H1 (cell line): ENCODE measurements at regions of chr12 and their contacts with region 1.

Region 1: GRCh38 chr12:100163416-100164152 is 20.9 kb upstream of the BLTP3B start:
- DNase-seq: peak; percentile 81 to 87
- H3K4me3 ChIP-seq: peak overlapping the region in 3 of 4 experiments; percentile 0 to 52 (median 28); a peak in 4 of 8 replicates
- H3K27ac ChIP-seq: no peak overlapping the region
- H3K4me1 ChIP-seq: peaks cover 2 to 8% (median 4%) of the 10 kb centered on the region in 4 experiments; a peak in 4 of 7 replicates
- H3K27me3 ChIP-seq: no peaks in the 10 kb centered on the region
- CTCF ChIP-seq: peak in 1 of 3 experiments; percentile 31; a peak in 1 of 4 replicates
- EP300 ChIP-seq: no peak
- POLR2A ChIP-seq: peak in 1 of 2 experiments; percentile 57; a peak in 1 of 3 replicates
- RAD21 ChIP-seq: peak in 1 of 2 experiments; percentile 18; a peak in 1 of 4 replicates

Region 2: GRCh38 chr12:100101000-100101399 is 62.6 kb before region 1 on chr12:
- CTCF ChIA-PET with region 1: no interaction called
- POLR2A ChIA-PET with region 1: no interaction called
- DNase-seq: no peak
- H3K4me3 ChIP-seq: no peak overlapping the region
- H3K27ac ChIP-seq: no peak overlapping the region
- H3K4me1 ChIP-seq: no peaks in the 10 kb centered on the region
- H3K27me3 ChIP-seq: no peaks in the 10 kb centered on the region
- CTCF ChIP-seq: no peak
- EP300 ChIP-seq: no peak
- POLR2A ChIP-seq: no peak
- RAD21 ChIP-seq: no peak

Region 3: GRCh38 chr12:100200463-100201181 is 37.0 kb after region 1 on chr12 and contains the start of gene ACTR6:
- CTCF ChIA-PET with region 1: interaction called, 7 read pairs
- POLR2A ChIA-PET with region 1: interaction called, 19 read pairs
- DNase-seq: peak; percentile 80 to 94
- H3K4me3 ChIP-seq: peak within 1 kb of the TSS; percentile 77 to 99 (median 94)
- H3K27ac ChIP-seq: peak within 1 kb of the TSS; percentile 49; the same call in 1 of the 2 replicates
- H3K4me1 ChIP-seq: peaks cover 0 to 3% (median 0%) of the 10 kb centered on the region in 4 experiments; a peak in 2 of 7 replicates
- H3K27me3 ChIP-seq: no peaks in the 10 kb centered on the region
- CTCF ChIP-seq: no peak
- EP300 ChIP-seq: 0 out of 3 replicates have a peak, but pooled peaks of 1 of the 2 experiments have one; percentile 56
- POLR2A ChIP-seq: peak; percentile 67 to 93
- RAD21 ChIP-seq: no peak
- total RNA-seq, gene ACTR6: 36.8 and 38.1 TPM in 2 replicates